Endothelial cell of umbilical vein (primary cell): ENCODE measurements at regions of chr17 and their contacts with region 1.

Region 1: DNA sequence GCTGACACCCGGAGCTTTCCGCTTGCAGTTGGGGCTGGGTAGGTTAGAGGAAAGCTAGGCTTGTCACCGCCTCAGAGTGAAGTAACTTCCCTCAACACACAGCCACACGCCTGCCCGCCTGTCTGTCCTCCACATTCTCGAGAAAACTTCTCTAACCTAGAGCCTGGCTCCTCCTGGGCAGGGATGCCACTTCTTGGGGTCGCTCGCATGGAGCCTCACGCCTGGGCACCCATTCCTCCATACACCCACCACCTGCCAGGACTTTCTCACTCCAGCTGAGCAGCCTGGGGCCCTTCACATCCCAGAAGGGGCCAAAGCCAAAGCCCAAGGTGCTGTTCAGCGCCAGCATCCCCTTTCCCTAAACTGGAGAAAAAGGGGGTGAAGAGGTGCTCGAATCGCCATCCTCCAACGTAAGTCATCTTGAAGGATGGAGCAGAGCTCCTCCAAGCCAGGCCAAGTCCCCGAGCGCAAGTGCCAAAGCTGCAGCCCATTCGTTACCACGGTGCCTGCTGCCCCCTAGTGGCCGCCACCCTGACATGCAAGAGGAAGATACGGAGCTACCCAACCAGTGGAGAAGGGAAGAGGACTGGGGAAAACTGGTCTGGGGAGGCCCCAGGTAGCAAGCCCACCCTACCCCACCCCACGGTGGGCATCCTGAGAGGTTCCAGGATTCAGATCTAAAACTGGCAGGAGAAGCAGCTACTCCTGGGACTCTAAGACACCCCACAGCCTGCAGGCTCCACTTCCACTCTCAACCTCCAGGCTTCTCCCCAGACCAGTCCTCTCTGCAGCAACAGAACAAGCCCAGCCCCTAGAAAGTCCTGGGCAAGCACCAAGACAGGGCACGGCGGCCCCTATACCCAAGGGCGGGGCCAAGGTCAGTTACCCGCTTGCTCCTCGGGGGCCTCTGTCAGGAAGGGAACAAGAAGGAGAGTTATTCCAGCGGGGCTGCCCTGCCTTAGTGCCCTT is 63.1 kb downstream of the MYO18A start:
- DNase-seq: peak; percentile 61
- H3K4me3 ChIP-seq: no peak overlapping the region
- H3K27ac ChIP-seq: no peak overlapping the region
- H3K4me1 ChIP-seq: no peaks in the 10 kb centered on the region
- H3K27me3 ChIP-seq: no peaks in the 10 kb centered on the region
- CTCF ChIP-seq: peak; percentile 85 to 93
- POLR2A ChIP-seq: no peak

Region 2: DNA sequence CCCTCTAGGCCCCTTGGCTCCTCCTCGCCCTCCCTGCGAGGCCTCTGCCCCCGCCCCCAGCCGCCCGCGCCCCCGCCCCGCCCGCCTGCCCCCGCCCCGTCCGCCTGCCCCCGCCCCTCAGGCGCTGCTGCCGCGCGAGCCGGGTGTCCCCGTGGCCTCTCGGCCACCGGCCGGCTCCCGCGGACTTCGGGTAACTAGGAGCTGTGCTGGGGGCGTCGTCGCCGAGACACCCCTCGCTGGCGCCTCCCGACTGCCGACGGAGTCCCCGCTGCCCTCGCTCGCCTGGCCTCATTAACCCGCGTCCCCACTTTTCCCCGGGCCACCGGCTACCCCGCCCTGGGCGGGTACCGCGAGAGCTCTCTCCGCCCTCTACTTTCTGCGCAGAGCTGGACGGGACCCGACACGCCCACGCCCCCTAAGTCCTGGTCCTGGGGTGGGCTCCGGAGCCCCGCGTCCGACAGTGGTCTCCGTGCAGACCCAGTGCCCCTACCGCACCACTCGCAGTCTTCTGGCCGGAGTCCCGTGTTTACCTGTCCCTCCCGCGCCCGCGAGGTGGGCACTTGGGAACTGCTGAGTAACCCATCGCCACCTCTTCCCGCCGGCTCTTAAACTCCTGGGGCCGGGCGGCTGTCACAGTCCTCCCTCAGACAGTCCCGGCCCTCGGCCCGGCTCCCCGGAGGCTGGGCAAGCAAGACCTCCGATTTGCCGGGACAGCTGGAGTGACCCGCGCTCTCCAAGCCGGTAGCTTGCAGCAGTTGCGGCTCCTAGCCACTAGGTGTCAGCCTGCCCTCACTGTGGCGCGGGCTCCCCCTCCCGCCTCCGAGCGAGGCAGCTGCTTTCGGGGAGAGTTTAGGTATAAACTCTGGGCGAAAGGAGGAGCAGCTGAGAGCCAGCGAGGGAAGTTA is 390.6 kb before region 1 on chr17 and contains the start of gene TLCD1:
- CTCF ChIA-PET with region 1: interaction called, 44 read pairs
- POLR2A ChIA-PET with region 1: no interaction called
- dilution Hi-C with region 1: no loop called
- intact Hi-C with region 1: no loop called
- DNase-seq: peak; percentile 95
- H3K4me3 ChIP-seq: peak within 1 kb of the TSS; percentile 29 to 57 (median 41)
- H3K27ac ChIP-seq: peak within 1 kb of the TSS; percentile 10
- H3K4me1 ChIP-seq: peaks cover 38% of the 10 kb centered on the region
- H3K27me3 ChIP-seq: no peaks in the 10 kb centered on the region
- CTCF ChIP-seq: peak; percentile 98 to 99
- POLR2A ChIP-seq: no peak
- total RNA-seq, gene TLCD1: 1.8 and 2.6 TPM in 2 replicates

Region 3: DNA sequence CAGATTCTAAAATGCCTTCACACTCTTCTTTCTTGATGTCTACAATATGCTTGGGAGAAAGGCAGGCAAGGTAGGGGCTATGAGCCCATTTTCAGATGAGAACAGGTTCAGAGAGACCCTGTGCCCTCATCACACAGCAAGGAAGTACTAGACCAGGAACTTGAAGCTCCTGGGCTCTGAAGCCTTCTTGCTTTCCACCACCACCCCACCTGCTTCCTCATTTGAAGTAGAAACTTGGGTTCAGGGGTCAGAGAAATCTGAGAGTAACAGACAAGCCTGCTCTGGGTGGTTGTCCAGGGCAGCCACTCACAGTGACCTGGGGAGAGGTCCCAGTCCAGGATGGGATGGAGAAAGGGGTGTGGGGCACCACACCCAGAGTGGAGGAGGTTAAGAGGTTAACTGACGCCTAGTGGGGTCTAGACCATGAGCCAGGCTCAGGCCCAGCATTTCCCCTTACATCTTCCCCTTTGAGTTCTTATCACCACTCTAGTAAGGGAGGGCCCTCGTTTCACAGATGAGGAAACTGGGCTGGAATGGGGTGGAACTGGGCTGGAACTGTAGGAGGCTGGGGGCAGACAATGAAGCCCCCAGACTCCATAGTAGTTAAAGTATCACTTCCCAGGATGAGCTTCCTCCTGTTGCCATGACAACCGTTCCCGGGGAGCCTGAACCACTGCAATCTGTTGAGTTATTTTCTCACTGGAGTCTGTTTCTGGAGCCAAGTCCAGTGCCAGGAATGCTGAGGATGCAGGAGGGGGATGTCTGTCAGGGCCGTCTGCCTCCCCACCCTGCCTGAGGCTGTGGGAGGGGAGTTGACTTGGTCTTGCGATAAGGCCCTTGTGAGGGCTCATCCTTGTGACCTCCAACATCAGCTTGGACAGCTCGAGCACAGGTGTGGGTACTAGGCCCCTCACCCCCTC is 149.6 kb before region 1 on chr17:
- CTCF ChIA-PET with region 1: interaction called, 1,079 read pairs
- POLR2A ChIA-PET with region 1: interaction called, 7 read pairs
- dilution Hi-C with region 1: no loop called
- intact Hi-C with region 1: loop called (anchors 1 kb)
- DNase-seq: no peak
- H3K4me3 ChIP-seq: no peak overlapping the region
- H3K27ac ChIP-seq: no peak overlapping the region
- H3K4me1 ChIP-seq: peaks cover 4% of the 10 kb centered on the region
- H3K27me3 ChIP-seq: no peaks in the 10 kb centered on the region
- CTCF ChIP-seq: no peak
- POLR2A ChIP-seq: no peak

Region 4: GRCh38 chr17:29019475-29020181 is 97.5 kb before region 1 on chr17:
- CTCF ChIA-PET with region 1: interaction called, 13 read pairs
- POLR2A ChIA-PET with region 1: no interaction called
- dilution Hi-C with region 1: no loop called
- intact Hi-C with region 1: no loop called
- DNase-seq: no peak
- H3K4me3 ChIP-seq: no peak overlapping the region
- H3K27ac ChIP-seq: no peak overlapping the region
- H3K4me1 ChIP-seq: peaks cover 6% of the 10 kb centered on the region
- H3K27me3 ChIP-seq: peaks cover 41 to 62% of the 10 kb centered on the region in 2 experiments
- CTCF ChIP-seq: no peak
- POLR2A ChIP-seq: no peak

Region 5: GRCh38 chr17:29070781-29071702 is 46.0 kb before region 1 on chr17:
- CTCF ChIA-PET with region 1: interaction called, 10 read pairs
- POLR2A ChIA-PET with region 1: no interaction called
- dilution Hi-C with region 1: no loop called
- intact Hi-C with region 1: no loop called
- DNase-seq: no peak
- H3K4me3 ChIP-seq: no peak overlapping the region
- H3K27ac ChIP-seq: no peak overlapping the region
- H3K4me1 ChIP-seq: no peaks in the 10 kb centered on the region
- H3K27me3 ChIP-seq: peaks cover 4 to 8% of the 10 kb centered on the region in 2 experiments
- CTCF ChIP-seq: no peak
- POLR2A ChIP-seq: no peak

Region 6: DNA sequence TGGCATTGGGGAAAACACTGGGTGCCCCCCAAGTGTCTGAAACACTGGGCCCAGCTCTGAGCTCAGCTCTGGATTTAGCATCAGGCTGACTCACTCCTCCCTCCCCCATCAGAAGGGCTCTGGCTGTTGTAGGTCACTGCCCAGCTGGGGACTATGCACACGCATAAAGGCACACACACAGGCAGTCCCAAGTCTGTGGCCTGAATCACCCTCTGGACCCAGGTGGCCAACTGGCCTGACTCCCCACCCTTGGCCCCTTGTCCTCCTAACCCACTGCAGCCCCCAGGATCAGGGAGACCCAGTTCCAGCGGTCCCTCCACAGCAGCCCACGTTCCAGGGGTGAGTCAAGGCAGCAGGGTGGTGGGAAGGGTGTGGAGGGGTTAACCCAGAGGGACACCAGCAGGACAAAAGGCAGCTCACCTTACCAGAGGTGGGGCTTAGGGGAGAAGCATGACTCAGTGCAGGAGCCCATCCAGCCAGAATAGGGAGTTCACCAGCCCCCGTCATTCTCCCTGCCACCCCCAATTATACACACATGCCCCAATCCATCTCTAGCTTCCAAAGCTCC is 16.1 kb after region 1 on chr17:
- CTCF ChIA-PET with region 1: interaction called, 48 read pairs
- POLR2A ChIA-PET with region 1: interaction called, 8 read pairs
- dilution Hi-C with region 1: no loop called
- intact Hi-C with region 1: no loop called
- DNase-seq: no peak
- H3K4me3 ChIP-seq: no peak overlapping the region
- H3K27ac ChIP-seq: no peak overlapping the region
- H3K4me1 ChIP-seq: no peaks in the 10 kb centered on the region
- H3K27me3 ChIP-seq: no peaks in the 10 kb centered on the region
- CTCF ChIP-seq: no peak
- POLR2A ChIP-seq: no peak

Region 7: DNA sequence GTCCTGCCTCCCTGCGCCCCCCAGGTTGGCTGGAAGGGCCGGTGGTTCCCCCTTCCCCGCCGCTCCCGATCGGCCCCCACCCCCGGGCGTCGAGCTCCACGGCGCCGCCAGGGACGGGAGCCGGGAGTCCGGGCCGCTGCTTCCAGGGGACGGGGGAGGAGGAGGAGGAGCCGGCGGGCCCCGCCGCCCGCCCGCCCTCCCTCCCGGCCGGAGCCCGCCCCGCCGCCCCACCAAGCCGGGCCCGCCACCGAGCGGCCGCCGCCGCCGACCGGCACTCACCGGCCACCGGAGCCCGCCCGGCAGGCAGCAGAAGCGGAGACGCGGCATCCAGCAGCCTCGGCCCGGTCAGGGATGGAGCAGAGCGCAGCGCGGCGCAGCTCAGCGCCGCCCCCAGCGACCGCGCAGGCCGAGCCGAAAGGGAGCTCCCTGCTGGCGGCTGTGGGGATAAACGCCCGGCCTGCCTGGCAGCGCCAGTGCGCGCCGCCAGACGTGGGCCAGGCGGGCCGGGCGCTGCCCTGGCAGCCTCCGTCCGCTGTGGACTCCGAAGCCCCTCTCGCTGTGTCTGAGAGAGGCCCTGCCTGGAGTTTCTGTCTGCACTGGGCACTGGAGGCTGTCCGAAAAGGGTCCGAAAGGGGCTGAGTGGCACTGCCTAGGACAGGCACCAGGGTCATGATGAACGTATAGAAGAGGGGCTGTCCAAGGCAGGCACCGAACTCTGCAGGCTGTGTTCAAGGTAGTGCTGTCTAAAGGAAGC is 63.1 kb after region 1 on chr17 and contains the start of gene MYO18A:
- CTCF ChIA-PET with region 1: interaction called, 12 read pairs
- POLR2A ChIA-PET with region 1: no interaction called
- dilution Hi-C with region 1: no loop called
- intact Hi-C with region 1: no loop called
- DNase-seq: peak; percentile 74
- H3K4me3 ChIP-seq: peak within 1 kb of the TSS; percentile 9 to 61 (median 42)
- H3K27ac ChIP-seq: no peak within 1 kb of the TSS
- H3K4me1 ChIP-seq: peaks cover 11% of the 10 kb centered on the region
- H3K27me3 ChIP-seq: no peaks in the 10 kb centered on the region
- CTCF ChIP-seq: peak; percentile 88 to 90
- POLR2A ChIP-seq: no peak
- total RNA-seq, gene MYO18A: 20.6 and 28.3 TPM in 2 replicates

Region 8: GRCh38 chr17:29303386-29303785 is 186.3 kb after region 1 on chr17:
- CTCF ChIA-PET with region 1: no interaction called
- POLR2A ChIA-PET with region 1: no interaction called
- dilution Hi-C with region 1: no loop called
- intact Hi-C with region 1: no loop called
- DNase-seq: no peak
- H3K4me3 ChIP-seq: no peak overlapping the region
- H3K27ac ChIP-seq: no peak overlapping the region
- H3K4me1 ChIP-seq: no peaks in the 10 kb centered on the region
- H3K27me3 ChIP-seq: no peaks in the 10 kb centered on the region
- CTCF ChIP-seq: no peak
- POLR2A ChIP-seq: no peak

Region 9: GRCh38 chr17:29495011-29495410 is 377.9 kb after region 1 on chr17:
- CTCF ChIA-PET with region 1: no interaction called
- POLR2A ChIA-PET with region 1: no interaction called
- dilution Hi-C with region 1: no loop called
- intact Hi-C with region 1: no loop called
- DNase-seq: no peak
- H3K4me3 ChIP-seq: no peak overlapping the region
- H3K27ac ChIP-seq: no peak overlapping the region
- H3K4me1 ChIP-seq: no peaks in the 10 kb centered on the region
- H3K27me3 ChIP-seq: no peaks in the 10 kb centered on the region
- CTCF ChIP-seq: no peak
- POLR2A ChIP-seq: no peak